ENCODE measurements at regions of chr15 and their contacts with region 1.

Region 1: GRCh38 chr15:59372352-59373211 is at the start of gene MYO1E:
- DNase-seq: peak; percentile 84 to 98 (median 89)

Region 2: GRCh38 chr15:58987489-58988005 is 385.0 kb before region 1 on chr15 and contains the start of gene RNF111:
- intact Hi-C with region 1: loop called (anchors 5 kb)
- DNase-seq: peak; percentile 77 to 97 (median 84)

Region 3: DNA sequence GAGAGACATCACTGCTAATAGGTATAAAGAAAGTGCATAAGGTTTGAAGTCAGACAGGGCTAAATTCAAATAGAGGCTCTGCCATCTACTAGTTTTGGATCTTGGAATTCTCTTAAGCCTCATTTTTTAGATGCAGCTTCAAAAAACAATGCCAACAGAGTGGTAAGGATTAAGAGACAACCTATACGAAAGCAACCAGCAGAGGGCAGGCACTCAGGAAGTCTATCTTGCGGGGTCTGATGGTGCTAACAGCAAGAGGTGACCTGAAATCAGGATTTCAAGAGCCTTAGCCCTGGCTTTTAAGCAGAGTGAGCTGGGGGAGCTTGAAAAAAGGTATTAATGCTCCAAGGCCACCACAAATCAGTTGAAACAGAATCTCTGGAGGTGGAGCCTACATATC is 125.2 kb before region 1 on chr15:
- intact Hi-C with region 1: loop called (anchors 10 kb)
- DNase-seq: peak in 6 of 10 donors; percentile 44 to 87 (median 58)

Region 4: DNA sequence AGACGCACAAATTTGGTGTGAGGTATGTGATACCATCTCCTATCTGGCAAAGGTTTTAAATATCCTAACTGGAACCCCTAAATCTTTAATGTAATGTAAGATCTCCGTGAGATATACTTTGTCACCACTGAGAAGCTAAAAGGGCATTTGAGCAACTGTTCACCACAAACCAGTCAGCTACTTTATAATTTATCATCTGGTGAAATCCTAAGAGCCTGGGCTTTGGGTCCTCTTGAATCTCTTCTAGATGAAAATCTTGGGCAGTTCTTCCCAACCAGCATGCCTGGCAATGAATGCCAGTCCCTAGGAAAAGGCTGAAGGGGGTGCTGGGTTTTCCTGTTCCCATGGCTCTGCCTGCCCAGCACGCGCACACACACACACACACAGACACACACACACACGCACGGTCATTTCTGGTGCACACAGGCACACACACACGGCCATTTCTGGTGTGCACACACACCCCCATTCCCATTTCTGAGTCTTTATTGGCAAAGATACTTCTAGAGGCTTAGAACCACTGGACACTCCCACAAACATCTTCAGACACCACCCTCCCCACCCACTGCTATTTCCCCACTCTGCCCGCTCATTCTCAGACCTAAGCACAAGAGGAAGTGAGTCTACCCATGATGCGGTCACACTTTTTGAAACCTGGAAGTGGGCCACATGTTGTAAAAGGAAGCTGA is 72.5 kb before region 1 on chr15:
- intact Hi-C with region 1: loop called (anchors 5 kb)
- DNase-seq: peak in 3 of 10 donors; percentile 14 to 43 (median 23)

Region 5: DNA sequence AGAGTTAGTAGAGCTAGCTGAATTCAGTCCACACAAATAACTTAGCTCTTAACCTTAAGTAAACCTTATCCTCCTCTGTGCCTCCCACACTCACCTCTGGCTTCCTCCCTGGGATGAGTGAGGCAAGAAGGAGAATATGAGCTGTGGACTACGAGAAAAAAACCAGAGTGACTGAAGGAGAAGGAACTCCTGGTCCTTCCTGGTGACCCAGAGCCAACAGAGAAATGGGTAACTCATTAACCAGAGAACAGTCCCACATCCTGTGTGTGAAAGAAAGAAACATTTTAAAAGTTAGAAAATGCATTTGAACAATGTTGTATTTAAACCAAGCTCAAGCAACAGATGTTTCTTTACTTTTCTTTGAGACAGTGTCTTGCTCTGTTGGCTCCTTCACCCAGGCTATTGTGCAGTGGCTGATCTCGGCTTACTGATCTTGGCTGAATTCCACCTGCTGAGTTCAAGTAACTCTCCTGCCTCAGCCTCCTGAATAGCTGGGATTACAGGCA is 37.9 kb after region 1 on chr15:
- intact Hi-C with region 1: loop called (anchors 5 kb)
- DNase-seq: no peak

Region 6: DNA sequence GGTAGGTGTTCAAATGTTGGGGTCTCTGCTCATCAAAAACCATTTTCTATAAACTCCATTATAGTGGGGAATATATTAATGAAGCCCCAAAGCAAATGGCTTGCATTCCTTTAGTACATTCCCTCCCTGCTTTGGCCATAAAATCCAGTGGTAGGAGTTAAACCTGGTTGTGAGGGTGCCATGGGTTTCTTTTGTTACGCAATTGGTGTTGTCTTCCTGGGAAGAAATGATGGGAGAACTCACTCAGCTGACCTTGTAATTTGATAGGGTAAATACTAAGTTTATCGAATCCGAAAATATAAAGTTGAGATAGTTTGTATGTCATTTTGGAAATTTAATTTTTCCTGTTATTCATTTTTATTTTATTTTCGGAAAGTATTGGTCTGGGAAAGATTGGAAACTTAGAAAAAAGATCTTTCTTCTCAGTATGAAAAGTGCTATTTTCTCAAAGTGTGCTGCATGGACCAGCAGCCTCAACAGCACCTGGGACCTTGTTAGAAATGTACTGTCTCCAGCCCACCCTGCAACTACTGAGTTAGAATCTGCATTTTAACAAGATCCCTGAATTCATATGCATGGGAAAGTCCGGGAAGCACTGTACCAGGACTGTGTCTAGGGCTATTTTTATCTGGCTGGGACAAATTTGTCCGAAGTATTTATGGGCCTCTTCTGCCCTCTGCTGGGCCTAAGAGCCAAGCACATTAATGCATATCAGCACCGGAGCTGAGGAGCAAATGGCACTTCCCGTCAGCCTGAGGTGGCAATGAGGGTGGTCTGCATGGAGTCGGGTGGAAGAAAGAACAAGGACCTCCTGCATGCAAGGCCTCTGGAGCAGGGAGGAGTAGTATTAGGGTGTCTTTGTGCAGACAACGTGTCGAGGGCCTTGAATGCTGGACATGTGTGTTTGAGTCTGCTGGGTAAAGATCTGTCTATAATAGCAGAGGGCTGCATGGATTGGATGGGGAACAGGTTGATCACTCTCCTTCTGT is 120.1 kb after region 1 on chr15:
- intact Hi-C with region 1: loop called (anchors 5 kb)
- DNase-seq: peak in 9 of 10 donors; percentile 36 to 93 (median 73)